ENCODE measurements at regions of chr6 and their contacts with region 1.

Region 1: GRCh38 chr6:41941280-41942066 is at the start of gene CCND3:
- DNase-seq: peak; percentile 95
- ATAC-seq: peak; percentile 85
- H3K4me3 Mint-ChIP-seq: peak within 1 kb of the TSS; percentile 90
- H3K27ac Mint-ChIP-seq: peak within 1 kb of the TSS; percentile 91
- H3K4me1 Mint-ChIP-seq: peaks cover 51% of the 10 kb centered on the region
- H3K27me3 Mint-ChIP-seq: no peaks in the 10 kb centered on the region
- CTCF ChIP-seq: no peak
- total RNA-seq, gene CCND3: 457 to 459 TPM

Region 2: GRCh38 chr6:41545703-41546474 is 395.6 kb before region 1 on chr6 and contains the start of gene FOXP4:
- CTCF ChIA-PET with region 1: no interaction called
- POLR2A ChIA-PET with region 1: no interaction called
- intact Hi-C with region 1: no loop called
- DNase-seq: peak; percentile 91
- ATAC-seq: peak; percentile 86
- H3K4me3 Mint-ChIP-seq: peak within 1 kb of the TSS; percentile 81
- H3K27ac Mint-ChIP-seq: peak within 1 kb of the TSS; percentile 75
- H3K4me1 Mint-ChIP-seq: peaks cover 20% of the 10 kb centered on the region
- H3K27me3 Mint-ChIP-seq: peaks cover 13% of the 10 kb centered on the region
- CTCF ChIP-seq: no peak
- total RNA-seq, gene FOXP4: 11.0 to 11.8 TPM

Region 3: GRCh38 chr6:41655711-41656691 is 285.5 kb before region 1 on chr6:
- CTCF ChIA-PET with region 1: no interaction called
- POLR2A ChIA-PET with region 1: no interaction called
- intact Hi-C with region 1: no loop called
- DNase-seq: no peak
- ATAC-seq: no peak
- H3K4me3 Mint-ChIP-seq: no peak overlapping the region
- H3K27ac Mint-ChIP-seq: no peak overlapping the region
- H3K4me1 Mint-ChIP-seq: no peaks in the 10 kb centered on the region
- H3K27me3 Mint-ChIP-seq: peaks cover 12% of the 10 kb centered on the region
- CTCF ChIP-seq: no peak

Region 4: DNA sequence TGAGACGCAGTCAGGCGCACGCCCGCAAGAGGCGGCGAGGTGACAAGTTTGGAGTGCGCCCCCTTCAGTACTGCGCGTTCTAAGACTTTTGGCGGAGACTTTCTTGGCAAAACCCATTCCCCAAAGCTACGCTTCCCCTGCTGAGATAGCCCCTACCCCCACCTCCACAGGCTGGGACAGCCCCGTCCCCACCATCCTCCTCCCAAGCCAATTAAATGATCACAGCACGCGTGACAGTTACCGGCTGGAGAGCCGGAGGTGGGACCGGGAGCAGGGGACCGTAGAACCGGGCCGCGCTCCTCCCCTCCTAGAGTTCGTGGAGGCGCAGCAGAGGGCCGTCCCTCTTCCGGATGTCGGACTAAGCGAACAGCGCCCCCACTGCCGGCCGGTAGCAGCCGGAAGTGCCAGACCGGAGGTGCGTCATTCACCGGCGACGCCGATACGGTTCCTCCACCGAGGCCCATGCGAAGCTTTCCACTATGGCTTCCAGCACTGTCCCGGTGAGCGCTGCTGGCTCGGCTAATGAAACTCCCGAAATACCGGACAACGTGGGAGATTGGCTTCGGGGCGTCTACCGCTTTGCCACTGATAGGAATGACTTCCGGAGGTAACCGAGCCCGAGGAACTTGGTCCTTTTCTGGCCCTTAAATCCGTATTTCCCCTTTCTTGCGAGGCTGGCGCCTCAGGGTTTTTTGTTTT is 154.1 kb before region 1 on chr6 and contains the start of gene TOMM6:
- CTCF ChIA-PET with region 1: interaction called, 15 read pairs
- POLR2A ChIA-PET with region 1: interaction called, 3 read pairs
- intact Hi-C with region 1: no loop called
- DNase-seq: peak; percentile 97
- ATAC-seq: peak; percentile 86
- H3K4me3 Mint-ChIP-seq: peak within 1 kb of the TSS; percentile 91
- H3K27ac Mint-ChIP-seq: peak within 1 kb of the TSS; percentile 97
- H3K4me1 Mint-ChIP-seq: peaks cover 19% of the 10 kb centered on the region
- H3K27me3 Mint-ChIP-seq: no peaks in the 10 kb centered on the region
- CTCF ChIP-seq: peak; percentile 86
- total RNA-seq, gene TOMM6: 310 to 314 TPM

Region 5: GRCh38 chr6:41920921-41921711 is 20.4 kb before region 1 on chr6 and contains the starts of genes BYSL and MED20:
- CTCF ChIA-PET with region 1: interaction called, 115 read pairs
- POLR2A ChIA-PET with region 1: interaction called, 58 read pairs
- intact Hi-C with region 1: no loop called
- DNase-seq: peak; percentile 96
- ATAC-seq: peak; percentile 89
- H3K4me3 Mint-ChIP-seq: peak within 1 kb of the TSS; percentile 93
- H3K27ac Mint-ChIP-seq: peak within 1 kb of the TSS; percentile 99
- H3K4me1 Mint-ChIP-seq: peaks cover 47% of the 10 kb centered on the region
- H3K27me3 Mint-ChIP-seq: no peaks in the 10 kb centered on the region
- CTCF ChIP-seq: peak; percentile 95
- total RNA-seq, gene BYSL: 56.4 to 59.5 TPM
- total RNA-seq, gene MED20: 23.4 to 28.0 TPM

Region 6: GRCh38 chr6:41958022-41958856 is 16.8 kb after region 1 on chr6:
- CTCF ChIA-PET with region 1: interaction called, 9 read pairs
- POLR2A ChIA-PET with region 1: interaction called, 13 read pairs
- intact Hi-C with region 1: no loop called
- DNase-seq: peak; percentile 79
- ATAC-seq: peak; percentile 85
- H3K4me3 Mint-ChIP-seq: peak overlapping the region; percentile 11
- H3K27ac Mint-ChIP-seq: peak overlapping the region; percentile 96
- H3K4me1 Mint-ChIP-seq: peaks cover 77% of the 10 kb centered on the region
- H3K27me3 Mint-ChIP-seq: no peaks in the 10 kb centered on the region
- CTCF ChIP-seq: no peak

Region 7: GRCh38 chr6:41976794-41977484 is 35.5 kb after region 1 on chr6:
- CTCF ChIA-PET with region 1: interaction called, 6 read pairs
- POLR2A ChIA-PET with region 1: interaction called, 7 read pairs
- intact Hi-C with region 1: loop called (anchors 5 kb)
- DNase-seq: peak; percentile 71
- ATAC-seq: peak; percentile 92
- H3K4me3 Mint-ChIP-seq: peak overlapping the region; percentile 74
- H3K27ac Mint-ChIP-seq: peak overlapping the region; percentile 99
- H3K4me1 Mint-ChIP-seq: peaks cover 69% of the 10 kb centered on the region
- H3K27me3 Mint-ChIP-seq: no peaks in the 10 kb centered on the region
- CTCF ChIP-seq: no peak

Region 8: DNA sequence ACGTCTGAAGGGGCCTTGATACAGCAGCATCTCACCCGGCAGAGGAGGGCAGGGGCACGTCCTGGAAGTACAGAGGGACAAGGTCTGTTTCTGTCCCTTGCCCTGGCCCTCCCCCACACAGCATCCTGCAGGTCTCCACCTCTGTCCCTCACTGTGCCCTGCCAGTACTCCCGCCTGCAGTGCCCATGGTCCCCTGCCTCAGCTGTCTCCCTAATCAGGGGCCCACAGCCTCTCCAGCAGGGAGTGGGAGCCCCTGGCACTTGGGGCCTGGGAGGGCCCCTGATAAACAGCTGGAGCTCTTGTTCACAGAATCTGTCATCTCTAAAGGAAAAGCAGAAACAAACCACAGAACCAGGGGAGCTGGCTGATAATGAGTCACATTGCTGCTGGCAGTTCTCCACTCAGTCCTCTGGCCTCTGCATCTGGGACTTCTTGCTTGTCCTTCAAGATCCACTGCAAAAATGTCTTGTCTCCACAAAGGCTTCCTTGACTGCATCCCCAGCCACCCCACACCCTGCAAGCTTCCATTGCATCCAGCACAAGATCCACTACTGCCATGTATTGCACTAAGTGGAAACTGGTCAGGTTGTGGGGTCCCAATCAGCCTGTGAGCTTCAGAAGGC is 75.7 kb after region 1 on chr6:
- CTCF ChIA-PET with region 1: interaction called, 4 read pairs
- POLR2A ChIA-PET with region 1: interaction called, 7 read pairs
- intact Hi-C with region 1: loop called (anchors 5 kb)
- DNase-seq: peak; percentile 74
- ATAC-seq: peak; percentile 66
- H3K4me3 Mint-ChIP-seq: peak overlapping the region; percentile 50
- H3K27ac Mint-ChIP-seq: peak overlapping the region; percentile 84
- H3K4me1 Mint-ChIP-seq: peaks cover 71% of the 10 kb centered on the region
- H3K27me3 Mint-ChIP-seq: no peaks in the 10 kb centered on the region
- CTCF ChIP-seq: no peak

Region 9: GRCh38 chr6:42050266-42051032 is 109.0 kb after region 1 on chr6 and contains the start of gene TAF8:
- CTCF ChIA-PET with region 1: interaction called, 392 read pairs
- POLR2A ChIA-PET with region 1: interaction called, 358 read pairs
- intact Hi-C with region 1: loop called (anchors 2 kb)
- DNase-seq: peak; percentile 95
- ATAC-seq: peak; percentile 72
- H3K4me3 Mint-ChIP-seq: peak within 1 kb of the TSS; percentile 93
- H3K27ac Mint-ChIP-seq: peak within 1 kb of the TSS; percentile 98
- H3K4me1 Mint-ChIP-seq: peaks cover 65% of the 10 kb centered on the region
- H3K27me3 Mint-ChIP-seq: no peaks in the 10 kb centered on the region
- CTCF ChIP-seq: no peak
- total RNA-seq, gene TAF8: 40.0 to 42.3 TPM